ENCODE measurements at regions of chr11 and their contacts with region 1.

Region 1: DNA sequence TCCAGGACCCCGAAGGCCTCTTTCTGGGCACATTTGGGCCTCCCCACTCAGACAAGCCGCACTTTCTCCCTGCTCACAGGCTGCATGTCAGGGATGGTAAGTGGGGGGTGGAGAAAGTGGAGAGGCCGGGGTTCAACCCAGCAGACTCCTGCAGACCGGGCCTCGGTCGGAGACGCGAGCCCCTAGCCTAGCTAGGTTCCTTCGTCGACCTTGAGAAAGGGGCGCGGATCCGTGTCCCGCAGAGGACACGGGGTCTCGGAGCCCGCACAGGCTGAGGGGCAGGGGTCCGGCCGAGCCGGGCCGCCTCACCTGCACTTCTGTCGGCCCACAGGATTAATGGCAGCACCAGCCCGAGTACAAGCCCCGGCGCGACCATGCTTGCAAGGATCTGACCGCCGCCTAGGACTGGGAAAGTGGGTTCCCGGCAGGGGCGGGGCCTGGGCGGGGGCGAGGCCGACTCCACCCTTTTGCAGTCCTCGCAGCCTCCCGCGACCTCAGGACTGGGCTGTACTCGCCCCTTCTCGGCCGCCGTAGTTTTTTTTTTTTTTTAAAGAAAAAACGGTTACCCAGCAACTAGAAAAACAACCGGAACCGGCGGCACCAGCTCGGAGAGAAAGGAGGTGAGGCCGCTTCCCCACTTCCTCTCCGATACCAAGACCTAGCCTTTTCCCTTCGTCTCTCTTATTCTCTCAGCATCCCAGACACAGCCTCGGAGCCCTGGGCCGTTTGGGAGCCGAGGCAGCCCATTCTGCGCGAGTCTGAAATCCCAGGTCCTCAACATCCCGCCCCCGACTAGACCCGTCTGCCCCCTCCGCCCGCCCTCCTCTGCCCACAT is at the starts of genes SIAE and SPA17:
- DNase-seq: peak; percentile 63 to 92 (median 87)
- ATAC-seq: peak; percentile 91
- H3K4me3 ChIP-seq: peak within 1 kb of the TSS; percentile 76
- H3K4me3 Mint-ChIP-seq: peak within 1 kb of the TSS in 9 of 10 donors; percentile 82 to 94 (median 91)
- H3K27ac ChIP-seq: peak within 1 kb of the TSS; percentile 91
- H3K27ac Mint-ChIP-seq: peak within 1 kb of the TSS in 7 of 9 donors; percentile 94 to 100 (median 98)
- H3K4me1 ChIP-seq: peaks cover 14 to 40% of the 10 kb centered on the region in 2 donors
- H3K4me1 Mint-ChIP-seq: peaks cover 22 to 39% (median 31%) of the 10 kb centered on the region in 7 donors
- H3K27me3 ChIP-seq: no peaks in the 10 kb centered on the region
- H3K27me3 Mint-ChIP-seq: peaks cover 0 to 4% (median 0%) of the 10 kb centered on the region in 5 donors
- total RNA-seq, gene SIAE: 6.2 to 11.3 (median 10.4) TPM
- total RNA-seq, gene SPA17: 1.00 to 1.1 (median 1.0) TPM

Region 2: DNA sequence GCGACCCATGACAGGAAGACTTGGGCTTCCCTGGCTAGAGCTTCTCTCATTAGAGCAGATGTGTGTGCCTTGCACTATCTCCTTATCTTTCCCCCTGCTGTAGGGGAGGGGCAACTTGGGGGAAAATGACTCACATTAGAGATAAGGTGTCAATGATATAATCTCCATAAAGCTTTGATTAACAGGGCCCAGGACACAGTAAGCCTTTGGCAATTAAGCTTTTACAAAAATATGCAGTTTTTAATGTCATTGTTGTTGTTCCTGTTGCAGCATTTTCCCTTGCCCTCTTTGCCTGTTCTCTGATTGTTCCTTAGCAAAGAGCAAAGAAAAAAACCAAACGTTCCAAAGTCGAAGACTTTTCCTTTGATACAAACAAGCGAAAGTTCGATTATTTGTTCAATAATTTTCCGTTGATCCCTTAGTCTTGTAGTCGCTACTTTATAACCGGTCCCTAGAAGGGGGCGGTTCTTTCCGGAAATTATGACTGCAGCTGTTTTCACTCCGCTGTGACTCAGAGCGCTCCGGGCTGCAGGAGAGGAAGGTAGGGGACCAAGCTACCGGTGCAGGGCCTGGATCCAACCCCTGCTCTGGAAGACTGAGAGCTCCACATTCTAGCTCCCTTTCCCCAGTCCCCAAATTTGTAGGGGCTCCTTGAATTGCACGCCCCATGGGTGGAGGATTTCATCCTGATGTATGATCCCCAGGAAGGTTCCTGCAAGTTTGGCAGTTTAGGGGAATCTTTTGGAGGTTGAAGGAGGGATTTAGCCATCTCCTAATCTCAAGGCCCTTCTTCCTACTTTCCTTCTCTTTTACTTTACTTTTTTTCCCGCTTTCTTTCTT is 558.4 kb before region 1 on chr11 and contains the start of gene VWA5A:
- CTCF ChIA-PET with region 1: no interaction called
- POLR2A ChIA-PET with region 1: no interaction called
- intact Hi-C with region 1: loop called in 1 of 2 experiments (anchors 5 kb)
- DNase-seq: peak; percentile 22 to 73 (median 59)
- ATAC-seq: peak; percentile 97
- H3K4me3 ChIP-seq: peak within 1 kb of the TSS; percentile 89
- H3K4me3 Mint-ChIP-seq: peak within 1 kb of the TSS; percentile 86 to 100 (median 90)
- H3K27ac ChIP-seq: peak within 1 kb of the TSS; percentile 41
- H3K27ac Mint-ChIP-seq: peak within 1 kb of the TSS; percentile 66 to 95 (median 83)
- H3K4me1 ChIP-seq: peaks cover 7 to 8% of the 10 kb centered on the region in 2 donors
- H3K4me1 Mint-ChIP-seq: peaks cover 13 to 37% (median 22%) of the 10 kb centered on the region in 7 donors
- H3K27me3 ChIP-seq: no peaks in the 10 kb centered on the region
- H3K27me3 Mint-ChIP-seq: peaks cover 0 to 15% (median 12%) of the 10 kb centered on the region in 5 donors
- total RNA-seq, gene VWA5A: 5.2 to 10.2 (median 8.3) TPM

Region 3: GRCh38 chr11:124717786-124718651 is 44.5 kb after region 1 on chr11:
- CTCF ChIA-PET with region 1: interaction called, 3 read pairs
- POLR2A ChIA-PET with region 1: no interaction called
- intact Hi-C with region 1: loop called in 1 of 2 experiments (anchors 1 kb)
- DNase-seq: peak in 6 of 9 donors; percentile 12 to 37 (median 24)
- ATAC-seq: peak; percentile 76
- H3K4me3 ChIP-seq: peak overlapping the region; percentile 48
- H3K4me3 Mint-ChIP-seq: peak overlapping the region; percentile 63 to 94 (median 82)
- H3K27ac ChIP-seq: no peak overlapping the region
- H3K27ac Mint-ChIP-seq: peak overlapping the region in 2 of 9 donors; percentile 14 to 43
- H3K4me1 ChIP-seq: peaks cover 10 to 15% of the 10 kb centered on the region in 2 donors
- H3K4me1 Mint-ChIP-seq: peaks cover 14 to 33% (median 21%) of the 10 kb centered on the region in 7 donors
- H3K27me3 ChIP-seq: peaks cover 5 to 6% of the 10 kb centered on the region in 2 donors
- H3K27me3 Mint-ChIP-seq: peaks cover 29 to 78% (median 49%) of the 10 kb centered on the region in 5 donors

Region 4: DNA sequence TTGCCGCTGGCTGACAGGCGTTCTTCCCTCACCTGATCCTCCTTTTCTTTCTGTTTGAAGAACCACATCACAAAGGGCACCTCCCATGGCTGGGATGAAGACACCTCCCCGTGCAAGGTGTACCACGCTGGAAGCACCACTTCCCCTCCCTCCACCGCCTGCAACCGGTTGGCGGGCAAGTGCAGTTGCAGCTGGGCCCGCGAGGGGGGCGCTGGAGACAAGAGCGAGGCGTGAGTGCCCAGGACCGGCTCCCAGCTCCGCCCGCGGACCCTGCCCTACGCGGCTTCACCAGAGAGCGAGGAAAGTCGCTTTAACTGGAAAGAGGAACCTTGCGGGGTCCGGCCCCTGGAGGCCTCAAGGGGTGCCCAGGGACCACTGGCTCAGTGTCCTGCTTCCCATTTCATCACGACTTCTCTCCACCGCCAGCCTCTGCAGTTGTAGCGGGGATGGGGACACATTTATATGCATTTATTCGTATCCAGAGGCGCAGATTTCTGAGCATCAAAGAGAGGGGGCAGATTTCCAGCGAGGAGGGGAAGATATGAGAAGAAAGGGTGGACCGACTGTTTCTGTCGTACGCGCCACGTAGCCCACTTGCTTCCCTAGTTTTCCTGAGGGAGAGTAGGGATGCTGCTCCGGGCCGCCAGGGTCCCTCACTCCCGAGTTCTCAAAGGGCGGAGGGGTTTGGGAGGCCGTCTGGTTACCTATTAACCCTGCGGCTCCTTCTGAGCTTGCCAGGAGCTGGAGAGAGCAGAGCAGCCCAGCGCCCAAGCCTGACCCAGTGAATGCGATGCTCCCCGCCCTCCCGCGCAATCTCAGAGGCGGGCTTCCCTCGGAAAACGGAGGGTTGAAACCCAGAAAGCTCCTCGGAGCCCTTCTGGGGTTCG is 85.0 kb after region 1 on chr11:
- CTCF ChIA-PET with region 1: interaction called, 110 read pairs
- POLR2A ChIA-PET with region 1: interaction called, 112 read pairs
- intact Hi-C with region 1: loop called (anchors 1 kb)
- DNase-seq: peak in 8 of 9 donors; percentile 61 to 73 (median 66)
- ATAC-seq: peak; percentile 78
- H3K4me3 ChIP-seq: peak overlapping the region; percentile 27
- H3K4me3 Mint-ChIP-seq: peak overlapping the region; percentile 52 to 98 (median 76)
- H3K27ac ChIP-seq: no peak overlapping the region
- H3K27ac Mint-ChIP-seq: peak overlapping the region in 2 of 9 donors; percentile 38 to 41
- H3K4me1 ChIP-seq: peaks cover 8 to 31% of the 10 kb centered on the region in 2 donors
- H3K4me1 Mint-ChIP-seq: peaks cover 6 to 40% (median 24%) of the 10 kb centered on the region in 7 donors
- H3K27me3 ChIP-seq: peaks cover 7 to 16% of the 10 kb centered on the region in 2 donors
- H3K27me3 Mint-ChIP-seq: peaks cover 36 to 60% (median 53%) of the 10 kb centered on the region in 5 donors

Region 5: DNA sequence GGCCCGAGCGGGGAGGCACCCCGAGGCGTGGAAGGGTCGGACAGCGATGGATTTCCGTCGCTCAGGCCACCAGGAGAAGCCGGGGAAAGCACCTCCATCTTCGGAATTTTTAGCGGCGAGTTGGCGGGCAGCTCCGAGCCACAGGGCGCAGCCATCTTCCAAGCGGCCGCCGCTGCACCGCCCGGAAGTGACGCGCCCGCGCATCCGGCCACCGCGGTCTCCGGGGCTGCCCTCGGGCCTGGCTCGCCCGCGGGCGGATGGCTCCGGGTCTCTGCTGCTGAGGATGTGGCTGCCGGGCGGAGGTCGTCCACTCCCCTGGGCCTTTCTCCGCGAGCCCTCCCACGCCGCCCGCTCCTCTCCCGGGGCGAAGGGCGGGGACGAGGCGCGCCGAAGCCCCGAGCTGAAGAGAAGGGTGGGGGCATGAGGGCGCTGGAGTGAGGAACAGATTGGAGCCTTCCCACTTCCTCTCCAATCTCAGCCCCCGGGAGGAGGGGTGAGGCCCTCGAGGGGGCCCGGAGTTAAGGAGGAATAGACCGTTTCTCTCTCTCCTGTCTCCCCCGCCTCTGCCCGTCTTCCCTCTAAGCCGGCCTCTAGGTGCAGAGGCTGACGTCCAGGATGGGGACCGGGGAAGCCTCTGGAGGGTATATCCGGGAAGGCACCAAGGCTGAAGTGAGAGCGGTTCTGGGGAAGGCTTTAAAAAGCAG is 126.8 kb after region 1 on chr11 and contains the start of gene MSANTD2:
- CTCF ChIA-PET with region 1: interaction called, 51 read pairs
- POLR2A ChIA-PET with region 1: interaction called, 29 read pairs
- intact Hi-C with region 1: loop called (anchors 1 kb)
- DNase-seq: peak; percentile 65 to 89 (median 73)
- ATAC-seq: peak; percentile 92
- H3K4me3 ChIP-seq: peak within 1 kb of the TSS; percentile 71
- H3K4me3 Mint-ChIP-seq: peak within 1 kb of the TSS; percentile 88 to 97 (median 96)
- H3K27ac ChIP-seq: peak within 1 kb of the TSS; percentile 93
- H3K27ac Mint-ChIP-seq: peak within 1 kb of the TSS; percentile 88 to 98 (median 94)
- H3K4me1 ChIP-seq: peaks cover 8 to 14% of the 10 kb centered on the region in 2 donors
- H3K4me1 Mint-ChIP-seq: peaks cover 13 to 38% (median 32%) of the 10 kb centered on the region in 7 donors
- H3K27me3 ChIP-seq: no peaks in the 10 kb centered on the region
- H3K27me3 Mint-ChIP-seq: peaks cover 0 to 24% (median 0%) of the 10 kb centered on the region in 5 donors
- total RNA-seq, gene MSANTD2: 9.1 to 29.5 (median 14.4) TPM

Region 6: DNA sequence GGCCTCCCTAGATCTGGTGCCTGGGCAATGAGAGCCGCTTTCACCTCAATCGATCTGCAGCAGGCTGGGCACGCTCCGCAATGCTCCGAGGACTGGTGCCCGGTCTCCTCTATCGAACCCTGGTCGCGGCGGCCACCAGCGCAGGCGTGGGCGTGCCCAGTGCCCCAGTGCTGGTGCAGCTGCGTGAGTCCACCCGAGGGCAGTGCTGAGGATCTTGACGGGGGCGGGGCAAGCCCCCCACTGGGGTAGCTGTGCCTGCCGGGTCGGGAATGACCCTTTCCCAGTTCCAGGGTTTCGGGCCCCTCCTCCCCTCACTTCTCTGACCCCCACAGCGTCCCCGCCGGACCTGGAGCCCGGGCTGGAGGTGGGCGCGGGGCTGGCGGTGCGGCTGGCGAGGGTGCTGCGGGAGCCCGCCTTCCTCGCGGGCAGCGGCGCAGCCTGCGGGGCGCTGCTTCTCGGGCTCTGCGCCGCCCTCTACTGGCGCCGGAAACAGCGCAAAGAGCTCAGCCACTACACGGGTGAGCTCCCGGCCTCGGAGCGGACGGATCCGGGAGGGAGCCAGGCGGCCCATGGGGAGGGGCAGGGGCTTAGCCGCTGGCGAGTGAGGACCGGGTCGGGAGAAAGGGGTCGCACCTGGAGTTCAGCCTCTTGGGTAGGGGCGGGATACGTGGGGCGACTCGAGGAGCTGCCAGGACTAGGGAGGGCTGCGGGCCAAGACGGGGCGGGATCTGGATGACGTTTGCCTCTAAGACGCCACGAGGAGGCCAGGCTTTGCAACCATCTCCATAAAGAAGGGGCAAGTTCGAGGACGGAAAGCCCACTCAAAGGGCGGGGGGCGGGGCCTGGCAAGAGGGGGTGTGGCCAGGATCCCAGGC is 202.6 kb after region 1 on chr11:
- CTCF ChIA-PET with region 1: interaction called, 3 read pairs
- POLR2A ChIA-PET with region 1: interaction called, 3 read pairs
- intact Hi-C with region 1: loop called (anchors 1 to 2 kb)
- DNase-seq: peak; percentile 71 to 84 (median 81)
- ATAC-seq: peak; percentile 94
- H3K4me3 ChIP-seq: peak overlapping the region; percentile 98
- H3K4me3 Mint-ChIP-seq: peak overlapping the region; percentile 85 to 94 (median 90)
- H3K27ac ChIP-seq: peak overlapping the region; percentile 79
- H3K27ac Mint-ChIP-seq: peak overlapping the region; percentile 77 to 95 (median 92)
- H3K4me1 ChIP-seq: peaks cover 7 to 9% of the 10 kb centered on the region in 2 donors
- H3K4me1 Mint-ChIP-seq: peaks cover 11 to 34% (median 24%) of the 10 kb centered on the region in 7 donors
- H3K27me3 ChIP-seq: peaks cover 0 to 3% of the 10 kb centered on the region in 2 donors
- H3K27me3 Mint-ChIP-seq: peaks cover 18 to 49% (median 34%) of the 10 kb centered on the region in 5 donors

Region 7: DNA sequence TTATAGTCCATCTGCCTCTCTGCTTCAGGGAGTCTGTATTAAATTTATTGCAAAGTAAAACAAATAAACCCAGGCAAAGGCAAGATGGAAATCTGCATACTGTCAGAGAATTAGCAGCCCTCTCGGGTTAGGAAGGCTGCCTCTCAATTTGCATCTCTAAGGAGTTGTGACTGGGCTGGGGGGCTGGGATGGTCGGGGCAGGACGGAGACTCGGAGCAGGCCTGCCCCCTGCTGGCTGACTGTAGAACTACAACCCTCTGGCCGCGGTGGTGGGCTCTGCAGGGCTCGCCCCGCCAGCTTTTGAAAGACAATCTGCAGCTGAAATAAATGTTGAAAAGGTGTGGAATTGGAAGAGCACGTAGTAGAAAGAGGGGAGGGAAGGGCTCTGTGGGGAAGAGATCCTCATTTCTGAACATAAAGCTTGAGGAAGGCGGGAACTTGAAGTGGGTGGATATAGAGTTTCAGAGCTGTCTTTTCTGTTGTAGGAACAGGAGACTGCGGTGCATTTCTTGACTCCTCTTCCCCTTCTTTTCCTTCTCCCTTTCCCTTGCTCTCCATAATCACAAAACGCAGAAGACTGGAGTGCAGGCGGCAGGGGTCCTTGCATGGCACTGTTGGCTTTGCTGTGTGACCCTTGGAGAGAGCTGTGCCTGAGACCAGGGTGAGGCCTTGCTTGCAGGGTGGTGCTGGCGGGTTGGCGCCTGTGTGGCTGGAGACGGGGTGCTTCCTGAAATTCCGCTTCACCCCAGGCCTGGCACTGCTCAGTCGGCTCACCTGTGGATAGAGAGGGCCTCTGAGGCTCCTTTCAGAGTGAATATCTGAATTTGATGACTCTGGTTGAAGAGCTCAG is 468.4 kb after region 1 on chr11:
- CTCF ChIA-PET with region 1: interaction called, 3 read pairs
- POLR2A ChIA-PET with region 1: no interaction called
- intact Hi-C with region 1: loop called in 1 of 2 experiments (anchors 1 kb)
- DNase-seq: peak; percentile 21 to 73 (median 48)
- ATAC-seq: peak; percentile 95
- H3K4me3 ChIP-seq: no peak overlapping the region
- H3K4me3 Mint-ChIP-seq: peak overlapping the region in 3 of 10 donors; percentile 10 to 49 (median 20)
- H3K27ac ChIP-seq: no peak overlapping the region
- H3K27ac Mint-ChIP-seq: no peak overlapping the region
- H3K4me1 ChIP-seq: no peaks in the 10 kb centered on the region
- H3K4me1 Mint-ChIP-seq: peaks cover 0 to 6% (median 5%) of the 10 kb centered on the region in 7 donors
- H3K27me3 ChIP-seq: peaks cover 0 to 5% of the 10 kb centered on the region in 2 donors
- H3K27me3 Mint-ChIP-seq: peaks cover 15 to 47% (median 27%) of the 10 kb centered on the region in 5 donors